ENCODE measurements at regions of chr17 and their contacts with region 1.

Region 1: GRCh38 chr17:8041249-8041928 is 2.5 kb downstream of the ALOX15B start:
- DNase-seq: no peak
- ATAC-seq: peak; percentile 59 to 66
- H3K4me3 ChIP-seq: no peak overlapping the region
- H3K27ac ChIP-seq: no peak overlapping the region
- H3K4me1 ChIP-seq: peaks cover 2% of the 10 kb centered on the region
- H3K27me3 ChIP-seq: no peaks in the 10 kb centered on the region

Region 2: GRCh38 chr17:7803981-7804380 is 237.4 kb before region 1 on chr17:
- intact Hi-C with region 1: no loop called
- DNase-seq: no peak
- ATAC-seq: peak; percentile 31 to 67
- H3K4me3 ChIP-seq: no peak overlapping the region
- H3K27ac ChIP-seq: no peak overlapping the region
- H3K4me1 ChIP-seq: no peaks in the 10 kb centered on the region
- H3K27me3 ChIP-seq: no peaks in the 10 kb centered on the region

Region 3: DNA sequence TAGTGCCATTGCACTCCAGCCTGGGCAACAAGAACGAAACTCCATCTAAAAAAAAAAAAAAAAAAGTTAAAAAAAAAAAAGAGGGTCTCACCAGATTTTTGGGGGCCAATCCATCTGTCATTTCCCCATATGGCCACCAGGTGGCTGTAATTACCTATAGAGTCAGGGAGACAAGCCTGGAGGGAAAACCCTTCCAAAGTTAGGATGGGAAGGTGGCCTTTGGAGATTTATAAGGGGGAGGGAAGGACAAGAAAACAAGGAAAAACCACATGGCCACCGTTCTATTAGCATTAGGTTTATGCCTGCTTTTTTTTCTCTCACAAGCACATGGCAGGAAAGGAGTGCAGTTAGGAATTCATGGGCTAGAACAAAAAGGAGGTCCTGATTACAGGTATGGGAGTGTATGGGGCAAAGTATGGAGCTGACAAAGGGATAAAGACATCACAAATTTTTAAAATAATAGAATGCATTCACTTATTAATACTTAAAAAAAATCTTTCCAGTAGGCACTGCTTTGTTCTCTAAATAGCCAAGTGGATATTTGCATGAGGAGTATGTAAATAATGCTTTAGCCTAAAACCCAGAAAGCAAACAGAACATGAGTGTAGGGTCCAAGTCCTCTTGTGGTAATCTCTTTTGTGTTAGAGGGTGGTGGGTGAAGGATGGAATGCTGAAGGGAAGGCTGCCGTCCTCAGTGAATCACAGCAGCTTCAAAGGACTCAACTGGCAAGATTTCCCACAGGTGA is 178.5 kb before region 1 on chr17:
- intact Hi-C with region 1: loop called in 1 of 4 experiments (anchors 10 kb)
- DNase-seq: peak in 2 of 3 donors; percentile 28 to 74
- ATAC-seq: no peak
- H3K4me3 ChIP-seq: no peak overlapping the region
- H3K27ac ChIP-seq: no peak overlapping the region
- H3K4me1 ChIP-seq: no peaks in the 10 kb centered on the region
- H3K27me3 ChIP-seq: no peaks in the 10 kb centered on the region

Region 4: GRCh38 chr17:7912927-7913524 is 128.4 kb before region 1 on chr17:
- intact Hi-C with region 1: loop called in 2 of 4 experiments (anchors 5 kb)
- DNase-seq: no peak
- ATAC-seq: peak in 1 of 2 donors; percentile 26
- H3K4me3 ChIP-seq: no peak overlapping the region
- H3K27ac ChIP-seq: no peak overlapping the region
- H3K4me1 ChIP-seq: peaks cover 5% of the 10 kb centered on the region
- H3K27me3 ChIP-seq: no peaks in the 10 kb centered on the region